ENCODE measurements at regions of chr2 and their contacts with region 1.

Region 1: GRCh38 chr2:153478334-153479261 is at the start of gene RPRM:
- DNase-seq: peak; percentile 93
- H3K4me3 ChIP-seq: peak within 1 kb of the TSS; percentile 60 to 76 (median 62)
- H3K27ac ChIP-seq: peak within 1 kb of the TSS; percentile 65 to 80 (median 76)
- H3K4me1 ChIP-seq: peaks cover 28 to 48% (median 36%) of the 10 kb centered on the region in 4 donors
- H3K27me3 ChIP-seq: peaks cover 0 to 16% (median 0%) of the 10 kb centered on the region in 4 donors
- CTCF ChIP-seq: peak in 2 of 3 experiments; percentile 87 to 96
- EP300 ChIP-seq: no peak
- POLR2A ChIP-seq: no peak
- total RNA-seq, gene RPRM: 3.3 to 12.1 (median 7.2) TPM

Region 2: GRCh38 chr2:152755029-152755428 is 723.6 kb before region 1 on chr2:
- intact Hi-C with region 1: loop called (anchors 10 kb)
- DNase-seq: no peak
- H3K4me3 ChIP-seq: no peak overlapping the region
- H3K27ac ChIP-seq: no peak overlapping the region
- H3K4me1 ChIP-seq: no peaks in the 10 kb centered on the region
- H3K27me3 ChIP-seq: no peaks in the 10 kb centered on the region
- CTCF ChIP-seq: peak; percentile 34 to 49 (median 35)
- EP300 ChIP-seq: no peak
- POLR2A ChIP-seq: no peak

Region 3: GRCh38 chr2:152861349-152861942 is 617.2 kb before region 1 on chr2:
- intact Hi-C with region 1: loop called (anchors 5 kb)
- DNase-seq: no peak
- H3K4me3 ChIP-seq: no peak overlapping the region
- H3K27ac ChIP-seq: no peak overlapping the region
- H3K4me1 ChIP-seq: no peaks in the 10 kb centered on the region
- H3K27me3 ChIP-seq: no peaks in the 10 kb centered on the region
- CTCF ChIP-seq: peak; percentile 59 to 74 (median 65)
- EP300 ChIP-seq: no peak
- POLR2A ChIP-seq: no peak

Region 4: DNA sequence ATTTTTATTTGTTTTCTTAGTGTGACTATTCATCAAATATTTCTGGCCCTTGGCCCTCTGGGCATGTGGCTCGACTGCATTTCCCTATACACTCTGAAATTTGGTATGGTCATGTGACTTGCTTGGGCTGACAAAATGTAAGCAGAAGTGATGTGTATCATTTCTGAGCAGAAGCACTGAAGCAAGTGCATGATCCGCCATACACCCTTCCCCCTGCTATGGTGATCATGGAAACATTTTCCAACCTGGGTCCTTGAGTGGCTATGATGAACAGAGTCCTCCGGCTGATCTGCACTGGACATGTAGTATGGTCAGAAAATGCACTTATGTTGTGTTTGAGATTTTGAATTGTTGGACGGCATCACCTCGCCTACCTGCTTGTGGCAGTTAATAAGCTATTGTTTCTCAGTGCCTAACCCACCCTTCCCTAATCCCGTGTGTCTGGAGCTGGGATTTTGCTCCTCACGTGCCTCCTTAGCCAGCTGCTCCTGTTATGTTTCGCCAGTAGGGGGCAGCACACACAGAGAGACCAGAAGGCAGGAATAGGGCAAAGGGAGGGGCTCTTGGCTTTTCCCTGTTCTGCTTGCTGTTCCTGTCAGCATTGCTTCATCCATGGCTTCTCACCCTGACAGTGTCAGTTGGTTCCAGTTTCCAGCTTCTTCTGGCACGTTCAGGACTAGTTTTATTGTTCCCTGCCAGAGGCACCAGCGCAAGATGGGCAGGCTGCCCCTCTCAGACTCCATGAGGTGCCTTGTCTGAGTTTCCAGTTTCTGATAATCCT is 552.9 kb before region 1 on chr2:
- intact Hi-C with region 1: loop called (anchors 5 kb)
- DNase-seq: no peak
- H3K4me3 ChIP-seq: no peak overlapping the region
- H3K27ac ChIP-seq: no peak overlapping the region
- H3K4me1 ChIP-seq: peaks cover 0 to 22% (median 19%) of the 10 kb centered on the region in 4 donors
- H3K27me3 ChIP-seq: no peaks in the 10 kb centered on the region
- CTCF ChIP-seq: peak; percentile 59 to 80 (median 65)
- EP300 ChIP-seq: no peak
- POLR2A ChIP-seq: no peak

Region 5: DNA sequence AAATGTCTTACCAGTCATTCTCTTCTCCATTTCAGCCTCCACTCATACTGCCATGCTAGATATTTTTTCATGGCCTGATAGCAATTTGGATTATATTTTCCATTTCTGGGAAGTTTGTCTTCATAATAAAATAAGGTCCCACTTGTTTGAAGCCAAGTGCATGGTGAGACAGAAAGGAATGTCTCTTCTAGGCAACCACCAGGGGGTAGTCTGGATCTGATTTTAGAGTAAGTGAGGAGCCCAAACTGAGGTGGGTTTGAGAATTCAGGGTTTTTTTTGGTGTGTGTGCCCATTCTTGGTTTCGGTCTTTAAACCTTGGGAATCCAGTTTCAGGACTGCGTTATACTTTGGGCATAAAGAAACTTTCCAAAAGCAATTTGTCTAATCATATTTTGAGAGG is 315.5 kb before region 1 on chr2:
- intact Hi-C with region 1: loop called (anchors 2 kb)
- DNase-seq: no peak
- H3K4me3 ChIP-seq: no peak overlapping the region
- H3K27ac ChIP-seq: no peak overlapping the region
- H3K4me1 ChIP-seq: no peaks in the 10 kb centered on the region
- H3K27me3 ChIP-seq: no peaks in the 10 kb centered on the region
- CTCF ChIP-seq: peak; percentile 36 to 49 (median 42)
- EP300 ChIP-seq: no peak
- POLR2A ChIP-seq: no peak

Region 6: DNA sequence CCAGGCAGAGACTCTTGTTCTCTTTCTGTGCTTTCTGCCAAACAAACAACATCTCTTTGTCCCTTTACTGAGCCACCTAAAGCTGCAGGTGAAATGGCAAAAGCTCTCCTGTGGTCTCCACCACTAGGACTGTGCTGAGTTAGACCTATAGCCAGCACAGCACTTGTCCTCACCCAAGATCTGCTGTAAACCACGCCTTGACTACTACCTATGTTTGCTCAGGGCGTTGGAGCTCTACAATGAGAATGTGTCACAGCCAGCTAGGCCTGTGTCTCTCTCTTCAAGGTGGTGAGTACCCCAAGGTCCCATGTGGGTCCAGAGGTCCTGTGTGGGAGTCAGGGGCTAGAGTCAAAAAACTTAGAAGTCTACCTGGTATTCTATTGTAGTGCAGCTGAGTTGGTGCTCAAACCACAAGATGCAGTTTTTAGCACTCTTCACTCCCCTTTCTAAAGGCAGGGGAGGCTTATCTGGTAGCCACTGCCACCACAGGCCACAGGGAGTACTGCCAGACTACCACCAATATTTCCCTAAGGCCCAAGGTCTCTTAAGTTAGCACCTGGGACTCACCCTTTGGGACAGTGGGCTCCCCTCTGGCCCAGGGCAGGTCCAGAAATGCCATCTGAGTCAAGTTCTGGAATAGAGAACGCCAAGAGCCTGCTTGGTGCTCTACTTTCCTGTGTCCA is 96.7 kb after region 1 on chr2:
- intact Hi-C with region 1: no loop called
- DNase-seq: no peak
- H3K4me3 ChIP-seq: no peak overlapping the region
- H3K27ac ChIP-seq: no peak overlapping the region
- H3K4me1 ChIP-seq: no peaks in the 10 kb centered on the region
- H3K27me3 ChIP-seq: no peaks in the 10 kb centered on the region
- CTCF ChIP-seq: no peak
- EP300 ChIP-seq: no peak
- POLR2A ChIP-seq: no peak